ENCODE measurements at regions of chr13 and their contacts with region 1.

Region 1: GRCh38 chr13:50081679-50082425 is 66.6 kb downstream of the KCNRG start:
- DNase-seq: peak; percentile 95
- H3K4me3 Mint-ChIP-seq: peak overlapping the region; percentile 80
- H3K27ac Mint-ChIP-seq: peak overlapping the region; percentile 91
- H3K4me1 Mint-ChIP-seq: peaks cover 2% of the 10 kb centered on the region
- H3K27me3 Mint-ChIP-seq: no peaks in the 10 kb centered on the region
- CTCF ChIP-seq: no peak

Region 2: GRCh38 chr13:49869519-49869918 is 212.3 kb before region 1 on chr13:
- CTCF ChIA-PET with region 1: no interaction called
- intact Hi-C with region 1: no loop called
- DNase-seq: no peak
- H3K4me3 Mint-ChIP-seq: no peak overlapping the region
- H3K27ac Mint-ChIP-seq: no peak overlapping the region
- H3K4me1 Mint-ChIP-seq: no peaks in the 10 kb centered on the region
- H3K27me3 Mint-ChIP-seq: no peaks in the 10 kb centered on the region
- CTCF ChIP-seq: no peak

Region 3: DNA sequence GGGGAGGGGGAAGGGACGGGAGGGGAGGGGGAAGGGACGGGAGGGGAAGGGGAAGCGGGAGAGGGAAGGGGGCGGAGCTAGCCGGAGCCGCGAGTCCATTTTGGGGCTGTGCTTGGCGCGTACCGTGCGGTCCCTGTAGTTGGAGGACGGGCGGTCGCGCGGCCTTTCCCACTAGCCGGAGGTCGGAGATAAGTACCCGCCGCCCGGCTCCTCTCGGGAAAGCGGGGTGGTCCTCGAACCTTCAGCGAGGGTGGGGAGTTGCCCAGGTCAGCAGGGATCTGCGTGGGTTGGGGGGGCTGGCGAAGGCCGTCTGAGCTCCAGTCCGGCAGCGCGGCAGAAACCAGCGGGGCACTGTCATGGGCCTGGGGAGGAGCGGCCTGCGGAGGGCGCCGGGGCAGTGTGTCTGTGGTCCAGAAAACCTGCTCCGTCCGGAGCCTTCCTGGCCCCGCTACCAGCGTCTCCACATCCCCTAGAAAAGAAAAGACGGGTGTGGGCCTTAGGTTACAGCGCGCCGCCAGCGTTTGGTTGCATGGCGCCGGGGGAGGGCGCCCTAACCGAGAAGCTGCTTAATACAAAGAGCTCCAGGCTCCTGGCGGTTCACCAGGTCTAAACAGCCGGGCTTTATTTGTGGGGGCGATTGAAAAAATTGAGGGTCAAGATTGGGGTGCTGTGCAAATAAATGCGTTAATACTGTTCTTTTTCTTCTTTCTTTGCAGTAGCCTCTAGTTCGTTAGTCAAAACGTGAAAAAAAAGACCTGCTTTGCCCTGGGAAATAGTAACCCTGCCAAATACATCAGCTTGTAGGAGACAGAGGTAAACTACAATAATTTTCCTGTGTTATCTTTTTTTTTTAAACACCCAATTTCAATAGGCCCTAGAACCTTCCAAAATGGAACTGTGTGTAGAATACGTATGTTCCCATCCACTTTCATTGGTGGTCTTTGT is 84.6 kb before region 1 on chr13 and contains the start of gene TRIM13:
- CTCF ChIA-PET with region 1: interaction called, 7 read pairs
- intact Hi-C with region 1: loop called (anchors 5 kb)
- DNase-seq: peak; percentile 81
- H3K4me3 Mint-ChIP-seq: peak within 1 kb of the TSS; percentile 81
- H3K27ac Mint-ChIP-seq: peak within 1 kb of the TSS; percentile 91
- H3K4me1 Mint-ChIP-seq: peaks cover 8% of the 10 kb centered on the region
- H3K27me3 Mint-ChIP-seq: no peaks in the 10 kb centered on the region
- CTCF ChIP-seq: peak; percentile 65
- total RNA-seq, gene TRIM13: 10.6 and 11.8 TPM in 2 replicates

Region 4: DNA sequence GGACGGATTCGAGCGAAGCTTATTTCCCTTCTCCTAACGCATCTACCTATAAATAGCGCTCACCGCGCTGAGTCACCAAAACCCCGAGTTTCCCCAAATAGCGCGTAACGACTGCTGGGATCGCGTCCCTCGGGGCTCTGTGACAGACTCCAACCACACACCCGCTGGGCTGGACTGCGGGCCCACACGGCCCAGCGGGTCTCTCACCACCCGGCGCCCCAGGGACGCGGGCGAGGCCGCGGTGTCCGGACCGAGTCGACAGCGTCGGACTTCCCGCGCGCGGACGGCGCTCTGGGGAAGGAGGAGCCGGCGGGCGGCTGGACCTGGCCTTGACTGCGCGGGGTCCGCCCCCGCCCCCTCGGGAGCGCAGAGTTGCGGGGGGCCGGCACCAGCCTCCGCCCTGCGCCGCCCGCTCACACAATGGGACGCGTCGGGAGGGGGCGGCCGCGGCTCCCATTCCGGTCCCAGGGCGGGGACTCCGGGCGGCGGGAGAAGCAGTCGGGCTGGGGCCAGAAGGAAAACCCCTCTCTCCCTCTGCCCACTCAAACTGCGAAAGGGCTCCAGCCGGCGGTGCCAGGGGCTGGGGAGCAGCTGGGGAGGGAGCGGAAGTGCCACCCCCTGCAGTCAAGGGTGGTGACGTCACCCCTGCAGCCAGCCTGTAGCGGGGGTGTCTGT is 42.1 kb after region 1 on chr13:
- CTCF ChIA-PET with region 1: interaction called, 3 read pairs
- intact Hi-C with region 1: loop called (anchors 5 kb)
- DNase-seq: peak; percentile 91
- H3K4me3 Mint-ChIP-seq: peak overlapping the region; percentile 89
- H3K27ac Mint-ChIP-seq: peak overlapping the region; percentile 82
- H3K4me1 Mint-ChIP-seq: peaks cover 14% of the 10 kb centered on the region
- H3K27me3 Mint-ChIP-seq: no peaks in the 10 kb centered on the region
- CTCF ChIP-seq: no peak

Region 5: DNA sequence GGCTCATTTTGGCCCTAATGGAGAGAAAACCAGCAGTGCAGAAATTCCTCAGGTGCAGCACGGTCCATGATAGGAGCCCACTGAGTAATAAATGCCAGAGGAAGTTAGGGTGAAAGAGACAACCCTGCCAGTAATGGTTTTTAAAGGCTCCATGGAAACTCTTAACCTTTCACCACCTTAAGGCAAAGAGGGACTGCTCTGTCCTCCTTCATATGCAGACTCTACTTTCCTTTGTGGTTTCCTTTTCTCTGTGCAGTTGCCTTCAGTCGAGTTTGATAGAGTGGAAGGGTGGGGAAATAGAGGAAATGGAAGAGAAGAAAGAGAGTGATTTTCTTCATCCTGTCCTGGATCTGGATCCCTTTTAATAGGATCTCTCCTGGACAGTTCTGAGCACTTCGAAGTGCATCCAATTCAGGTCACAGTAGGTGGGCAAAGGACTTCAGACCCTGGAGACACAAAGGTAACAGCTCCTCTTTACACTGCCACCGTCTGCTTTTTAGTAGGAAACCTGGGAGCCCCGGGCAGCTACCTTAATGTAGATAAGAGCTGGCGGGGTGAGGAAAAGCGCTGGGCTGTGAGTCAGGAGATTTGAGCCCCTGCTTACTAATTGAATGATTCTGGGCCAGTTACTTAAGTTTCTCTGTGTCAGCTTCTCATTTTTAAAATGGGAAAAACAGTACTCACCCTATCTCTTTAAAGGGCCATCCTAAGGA is 228.2 kb after region 1 on chr13:
- CTCF ChIA-PET with region 1: no interaction called
- intact Hi-C with region 1: no loop called
- DNase-seq: no peak
- H3K4me3 Mint-ChIP-seq: no peak overlapping the region
- H3K27ac Mint-ChIP-seq: no peak overlapping the region
- H3K4me1 Mint-ChIP-seq: no peaks in the 10 kb centered on the region
- H3K27me3 Mint-ChIP-seq: no peaks in the 10 kb centered on the region
- CTCF ChIP-seq: no peak

Region 6: GRCh38 chr13:50365408-50366391 is 283.8 kb after region 1 on chr13:
- CTCF ChIA-PET with region 1: no interaction called
- intact Hi-C with region 1: loop called (anchors 5 kb)
- DNase-seq: peak; percentile 68
- H3K4me3 Mint-ChIP-seq: peak overlapping the region; percentile 59
- H3K27ac Mint-ChIP-seq: peak overlapping the region; percentile 68
- H3K4me1 Mint-ChIP-seq: peaks cover 27% of the 10 kb centered on the region
- H3K27me3 Mint-ChIP-seq: no peaks in the 10 kb centered on the region
- CTCF ChIP-seq: no peak

Region 7: GRCh38 chr13:50531917-50532899 is 450.4 kb after region 1 on chr13:
- CTCF ChIA-PET with region 1: no interaction called
- intact Hi-C with region 1: loop called (anchors 1 kb)
- DNase-seq: no peak
- H3K4me3 Mint-ChIP-seq: no peak overlapping the region
- H3K27ac Mint-ChIP-seq: no peak overlapping the region
- H3K4me1 Mint-ChIP-seq: peaks cover 11% of the 10 kb centered on the region
- H3K27me3 Mint-ChIP-seq: no peaks in the 10 kb centered on the region
- CTCF ChIP-seq: no peak

Region 8: GRCh38 chr13:50801087-50801931 is 719.5 kb after region 1 on chr13:
- CTCF ChIA-PET with region 1: no interaction called
- intact Hi-C with region 1: loop called (anchors 2 kb)
- DNase-seq: peak; percentile 63
- H3K4me3 Mint-ChIP-seq: no peak overlapping the region
- H3K27ac Mint-ChIP-seq: no peak overlapping the region
- H3K4me1 Mint-ChIP-seq: no peaks in the 10 kb centered on the region
- H3K27me3 Mint-ChIP-seq: peaks cover 14% of the 10 kb centered on the region
- CTCF ChIP-seq: peak; percentile 35